HepG2 (cell line): ENCODE measurements at regions of chr1 and their contacts with region 1.

Region 1: DNA sequence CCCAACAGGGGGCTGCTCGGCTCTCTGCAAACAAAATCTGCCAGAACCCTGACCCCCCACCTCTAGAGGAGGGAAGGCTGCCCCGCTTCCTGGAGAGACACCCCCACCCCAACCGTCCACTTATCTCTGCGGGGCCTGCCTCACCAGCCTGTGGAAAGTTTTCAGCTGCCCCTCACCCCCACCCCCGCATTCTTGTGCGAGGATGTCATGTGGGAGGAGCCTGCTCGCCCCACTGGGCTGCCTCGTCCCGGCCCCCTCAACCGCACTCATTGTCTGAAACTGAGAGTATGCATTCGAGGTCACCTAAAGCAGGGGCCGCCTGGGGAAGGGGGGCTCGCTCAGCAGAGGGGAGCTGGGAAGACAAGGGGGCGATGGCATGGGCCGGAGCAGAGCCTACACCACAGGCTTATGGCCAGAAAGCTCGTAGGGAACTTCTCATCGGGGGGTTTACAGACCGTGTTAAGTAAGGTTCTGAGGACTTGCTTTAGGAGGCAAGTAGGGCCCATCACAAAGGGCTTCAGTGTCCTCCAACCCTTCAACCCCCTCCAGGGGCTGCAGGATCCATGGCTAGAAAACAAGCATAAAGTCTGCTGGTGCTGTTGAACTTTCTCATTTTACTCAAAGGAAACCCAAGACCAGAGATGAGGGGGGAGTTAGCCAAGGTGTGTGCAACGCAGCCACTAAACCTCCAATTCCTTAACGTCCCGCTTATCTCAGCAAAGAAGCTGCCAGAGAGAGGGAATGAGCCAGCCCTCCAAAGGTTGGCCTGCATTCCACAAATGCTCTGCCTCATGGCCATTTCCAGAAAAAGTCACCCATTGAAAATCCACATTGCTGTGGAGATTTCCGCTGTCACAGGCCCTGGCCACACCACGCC is 9.4 kb downstream of the EPHA2 start:
- DNase-seq: peak; percentile 90
- ATAC-seq: peak; percentile 57
- H3K4me3 ChIP-seq: peak overlapping the region in 2 of 3 experiments; percentile 15 to 51; a peak in 3 of 6 replicates
- H3K27ac ChIP-seq: peak overlapping the region; percentile 76
- H3K4me1 ChIP-seq: peaks cover 100% of the 10 kb centered on the region
- H3K27me3 ChIP-seq: no peaks in the 10 kb centered on the region
- CTCF ChIP-seq: peak; percentile 14; the same call in 1 of the 2 replicates
- EP300 ChIP-seq: peak in 1 of 2 experiments; percentile 75; a peak in 2 of 4 replicates
- POLR2A ChIP-seq: peak; percentile 23 to 65
- RAD21 ChIP-seq: no peak

Region 2: GRCh38 chr1:16111771-16112595 is 34.5 kb before region 1 on chr1:
- CTCF ChIA-PET with region 1: no interaction called
- POLR2A ChIA-PET with region 1: interaction called, 13 read pairs
- in situ Hi-C with region 1: no loop called
- intact Hi-C with region 1: no loop called
- DNase-seq: no peak
- ATAC-seq: peak; percentile 30
- H3K4me3 ChIP-seq: peak overlapping the region in 1 of 3 experiments; percentile 22; a peak in 1 of 6 replicates
- H3K27ac ChIP-seq: no peak overlapping the region
- H3K4me1 ChIP-seq: peaks cover 70% of the 10 kb centered on the region
- H3K27me3 ChIP-seq: peaks cover 5 to 20% of the 10 kb centered on the region in 2 experiments; a peak in 4 of 5 replicates
- CTCF ChIP-seq: no peak
- EP300 ChIP-seq: no peak
- POLR2A ChIP-seq: no peak
- RAD21 ChIP-seq: no peak

Region 3: DNA sequence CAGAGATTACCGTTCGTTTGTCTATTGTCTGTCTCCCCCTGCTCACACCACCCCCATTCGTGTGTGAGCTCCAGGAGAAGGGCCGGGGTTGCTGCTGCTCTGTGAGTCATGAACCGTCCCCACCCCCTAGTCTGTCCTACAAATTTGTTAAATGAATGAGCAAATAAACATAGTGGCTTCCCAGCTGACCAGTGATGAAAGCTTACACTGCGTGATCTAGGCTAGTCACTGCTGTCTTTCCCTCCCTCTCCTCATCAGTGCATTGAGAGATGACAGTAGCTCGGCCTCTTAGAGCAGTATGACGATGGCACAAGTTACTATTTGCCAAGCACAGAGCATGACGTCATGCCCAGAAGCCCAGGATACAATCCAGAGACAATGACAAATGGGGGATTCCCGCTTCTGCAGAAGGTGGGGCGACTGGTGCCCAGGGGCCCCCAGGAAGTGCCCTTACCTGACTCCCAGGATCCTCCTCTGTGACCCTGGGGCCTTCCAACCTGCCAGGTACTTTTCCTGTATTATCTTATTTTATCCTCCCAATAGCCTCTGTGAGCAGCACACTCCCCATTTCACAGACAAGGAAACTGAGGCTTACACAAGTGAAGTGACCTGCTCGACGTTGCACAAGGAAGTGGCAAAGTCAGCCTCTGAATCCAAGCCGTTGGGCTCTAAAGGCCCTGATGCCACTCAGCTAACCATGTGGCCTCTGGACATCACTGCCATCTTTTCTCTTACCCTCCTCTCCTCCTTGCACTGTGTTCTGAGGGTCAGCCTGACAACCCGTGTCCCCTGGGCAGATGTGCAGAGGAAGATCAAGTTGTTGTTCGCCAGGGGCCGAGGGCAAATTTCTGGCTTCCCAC is 17.9 kb after region 1 on chr1:
- CTCF ChIA-PET with region 1: no interaction called
- POLR2A ChIA-PET with region 1: interaction called, 63 read pairs
- in situ Hi-C with region 1: no loop called
- intact Hi-C with region 1: no loop called
- DNase-seq: peak; percentile 96
- ATAC-seq: peak; percentile 83
- H3K4me3 ChIP-seq: peak overlapping the region in 2 of 3 experiments; percentile 8 to 47; a peak in 3 of 6 replicates
- H3K27ac ChIP-seq: peak overlapping the region; percentile 38
- H3K4me1 ChIP-seq: peaks cover 53% of the 10 kb centered on the region
- H3K27me3 ChIP-seq: no peaks in the 10 kb centered on the region; a peak in 1 of 5 replicates
- CTCF ChIP-seq: no peak
- EP300 ChIP-seq: peak in 1 of 2 experiments; percentile 60; a peak in 2 of 4 replicates
- POLR2A ChIP-seq: no peak
- RAD21 ChIP-seq: no peak

Region 4: DNA sequence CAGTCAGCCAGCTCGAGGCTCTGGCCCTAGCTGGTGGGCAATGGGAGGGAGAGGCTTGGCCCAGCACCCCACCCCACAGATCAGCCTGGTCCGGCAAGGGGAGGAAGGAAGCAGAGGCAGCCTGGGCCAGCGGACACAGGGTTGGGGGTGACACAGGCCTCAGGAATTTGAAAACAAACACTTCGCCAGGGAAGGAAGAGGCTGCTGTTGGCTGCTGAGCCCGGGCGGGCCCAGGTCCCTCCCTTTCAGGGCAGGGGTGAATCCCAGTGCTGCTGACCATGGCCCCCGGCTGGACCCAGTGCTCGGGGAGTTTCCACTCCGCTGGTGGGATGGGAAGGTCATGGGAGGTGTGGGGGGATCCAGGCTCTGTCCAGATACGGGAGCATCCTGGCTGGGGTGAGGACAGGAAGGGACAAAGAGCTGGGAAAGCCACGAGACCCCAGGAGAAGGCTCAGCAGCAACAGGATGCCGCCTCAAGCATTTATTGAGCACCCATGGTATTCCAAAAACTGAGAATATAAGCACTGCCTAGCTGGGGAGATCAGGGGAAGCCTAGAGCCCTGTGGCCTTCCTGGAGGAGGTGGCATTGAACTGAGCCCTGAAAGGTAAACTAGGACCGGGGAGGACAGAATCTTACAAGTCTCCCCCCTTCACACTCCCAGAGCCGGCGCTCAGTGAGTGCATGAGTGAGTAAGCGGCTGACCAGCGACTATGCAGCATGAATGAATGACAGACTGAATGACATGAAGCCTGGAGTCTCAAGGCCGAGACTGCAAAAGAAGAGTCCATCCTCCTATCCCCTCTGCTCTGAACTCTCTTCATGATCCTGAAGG is 35.6 kb after region 1 on chr1:
- CTCF ChIA-PET with region 1: no interaction called
- POLR2A ChIA-PET with region 1: interaction called, 42 read pairs
- in situ Hi-C with region 1: loop called (anchors 5 kb)
- intact Hi-C with region 1: loop called (anchors 1 kb)
- DNase-seq: peak; percentile 87
- ATAC-seq: peak; percentile 89
- H3K4me3 ChIP-seq: peak overlapping the region; percentile 18 to 64 (median 30); a peak in 4 of 6 replicates
- H3K27ac ChIP-seq: peak overlapping the region; percentile 76
- H3K4me1 ChIP-seq: peaks cover 90% of the 10 kb centered on the region
- H3K27me3 ChIP-seq: no peaks in the 10 kb centered on the region
- CTCF ChIP-seq: 0 out of 2 replicates have a peak, but pooled peaks have one; percentile 10
- EP300 ChIP-seq: peak; percentile 15 to 76; a peak in 3 of 4 replicates
- POLR2A ChIP-seq: peak; percentile 46 to 47; a peak in 2 of 4 replicates
- RAD21 ChIP-seq: no peak

Region 5: GRCh38 chr1:16289963-16290362 is 143.4 kb after region 1 on chr1:
- CTCF ChIA-PET with region 1: no interaction called
- POLR2A ChIA-PET with region 1: no interaction called
- in situ Hi-C with region 1: no loop called
- intact Hi-C with region 1: no loop called
- DNase-seq: no peak
- ATAC-seq: no peak
- H3K4me3 ChIP-seq: no peak overlapping the region
- H3K27ac ChIP-seq: no peak overlapping the region
- H3K4me1 ChIP-seq: no peaks in the 10 kb centered on the region
- H3K27me3 ChIP-seq: no peaks in the 10 kb centered on the region
- CTCF ChIP-seq: no peak
- EP300 ChIP-seq: no peak
- POLR2A ChIP-seq: no peak
- RAD21 ChIP-seq: no peak